CD8-positive, alpha-beta memory T cell (primary cell): ENCODE measurements at regions of chr21 and their contacts with region 1.

Region 1: GRCh38 chr21:37267269-37268184 is at the start of gene VPS26C:
- DNase-seq: peak; percentile 97 to 99 (median 98)
- H3K4me3 ChIP-seq: peak within 1 kb of the TSS; percentile 90
- H3K4me3 Mint-ChIP-seq: peak within 1 kb of the TSS; percentile 93 to 97 (median 95)
- H3K27ac ChIP-seq: peak within 1 kb of the TSS; percentile 99
- H3K27ac Mint-ChIP-seq: peak within 1 kb of the TSS; percentile 94 to 99 (median 98)
- H3K4me1 ChIP-seq: peaks cover 39% of the 10 kb centered on the region
- H3K4me1 Mint-ChIP-seq: peaks cover 34 to 55% (median 48%) of the 10 kb centered on the region in 3 donors
- H3K27me3 ChIP-seq: no peaks in the 10 kb centered on the region
- H3K27me3 Mint-ChIP-seq: peaks cover 0 to 9% of the 10 kb centered on the region in 2 donors
- total RNA-seq, gene VPS26C: 59.1 to 62.7 TPM

Region 2: DNA sequence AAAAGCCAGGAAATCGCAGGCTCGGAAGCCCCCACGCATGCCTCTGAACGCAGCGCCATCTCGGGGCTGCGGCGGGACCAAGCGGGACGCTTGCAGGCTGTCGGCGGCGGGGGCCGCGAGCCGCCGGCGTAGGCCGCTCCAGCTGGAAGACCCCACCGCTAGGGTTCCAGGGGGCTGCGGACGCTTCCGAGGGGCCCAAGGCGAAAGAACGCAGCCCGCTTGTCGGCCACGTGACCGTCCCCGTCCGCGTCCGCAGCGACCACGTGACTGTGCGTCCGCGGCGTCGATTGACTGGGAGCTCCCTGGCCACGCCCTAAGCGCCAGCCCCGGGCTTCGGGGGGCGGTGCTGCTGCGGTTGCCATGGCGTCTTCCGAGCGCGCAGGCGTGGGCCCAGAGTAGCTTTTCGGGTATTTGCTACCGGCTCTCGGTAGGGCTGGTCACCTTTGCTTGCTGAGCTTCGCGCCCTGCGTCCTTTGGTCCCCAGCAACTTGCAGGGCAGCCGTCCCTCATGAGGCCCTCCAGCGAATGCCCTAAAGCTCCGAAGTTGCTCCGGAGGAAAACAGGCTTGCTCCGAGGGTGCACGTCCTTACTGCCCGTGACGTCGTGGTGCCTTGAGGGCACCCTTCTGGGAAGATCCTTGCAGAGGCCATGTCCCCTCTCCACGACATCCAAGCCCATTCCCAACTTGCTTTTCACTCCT is 296.3 kb after region 1 on chr21:
- CTCF ChIA-PET with region 1: interaction called, 8 read pairs
- POLR2A ChIA-PET with region 1: interaction called, 11 read pairs
- DNase-seq: peak; percentile 88 to 94 (median 89)
- H3K4me3 ChIP-seq: peak overlapping the region; percentile 97
- H3K4me3 Mint-ChIP-seq: peak overlapping the region; percentile 94 to 99 (median 98)
- H3K27ac ChIP-seq: peak overlapping the region; percentile 97
- H3K27ac Mint-ChIP-seq: peak overlapping the region; percentile 99 to 100 (median 100)
- H3K4me1 ChIP-seq: peaks cover 16% of the 10 kb centered on the region
- H3K4me1 Mint-ChIP-seq: peaks cover 17 to 28% (median 19%) of the 10 kb centered on the region in 3 donors
- H3K27me3 ChIP-seq: no peaks in the 10 kb centered on the region
- H3K27me3 Mint-ChIP-seq: no peaks in the 10 kb centered on the region